ENCODE measurements at regions of chr19 and their contacts with region 1.

Region 1: GRCh38 chr19:1189419-1189818 is 15.4 kb upstream of the SBNO2 start:
- DNase-seq: no peak
- ATAC-seq: no peak
- H3K4me3 ChIP-seq: no peak overlapping the region
- H3K27ac ChIP-seq: no peak overlapping the region
- H3K4me1 ChIP-seq: no peaks in the 10 kb centered on the region
- H3K27me3 ChIP-seq: no peaks in the 10 kb centered on the region

Region 2: GRCh38 chr19:1113033-1113985 is 76.1 kb before region 1 on chr19:
- intact Hi-C with region 1: loop called (anchors 5 kb)
- DNase-seq: peak; percentile 98 to 99 (median 99)
- ATAC-seq: peak; percentile 90 to 91
- H3K4me3 ChIP-seq: no peak overlapping the region
- H3K27ac ChIP-seq: peak overlapping the region; percentile 32
- H3K4me1 ChIP-seq: no peaks in the 10 kb centered on the region
- H3K27me3 ChIP-seq: no peaks in the 10 kb centered on the region

Region 3: DNA sequence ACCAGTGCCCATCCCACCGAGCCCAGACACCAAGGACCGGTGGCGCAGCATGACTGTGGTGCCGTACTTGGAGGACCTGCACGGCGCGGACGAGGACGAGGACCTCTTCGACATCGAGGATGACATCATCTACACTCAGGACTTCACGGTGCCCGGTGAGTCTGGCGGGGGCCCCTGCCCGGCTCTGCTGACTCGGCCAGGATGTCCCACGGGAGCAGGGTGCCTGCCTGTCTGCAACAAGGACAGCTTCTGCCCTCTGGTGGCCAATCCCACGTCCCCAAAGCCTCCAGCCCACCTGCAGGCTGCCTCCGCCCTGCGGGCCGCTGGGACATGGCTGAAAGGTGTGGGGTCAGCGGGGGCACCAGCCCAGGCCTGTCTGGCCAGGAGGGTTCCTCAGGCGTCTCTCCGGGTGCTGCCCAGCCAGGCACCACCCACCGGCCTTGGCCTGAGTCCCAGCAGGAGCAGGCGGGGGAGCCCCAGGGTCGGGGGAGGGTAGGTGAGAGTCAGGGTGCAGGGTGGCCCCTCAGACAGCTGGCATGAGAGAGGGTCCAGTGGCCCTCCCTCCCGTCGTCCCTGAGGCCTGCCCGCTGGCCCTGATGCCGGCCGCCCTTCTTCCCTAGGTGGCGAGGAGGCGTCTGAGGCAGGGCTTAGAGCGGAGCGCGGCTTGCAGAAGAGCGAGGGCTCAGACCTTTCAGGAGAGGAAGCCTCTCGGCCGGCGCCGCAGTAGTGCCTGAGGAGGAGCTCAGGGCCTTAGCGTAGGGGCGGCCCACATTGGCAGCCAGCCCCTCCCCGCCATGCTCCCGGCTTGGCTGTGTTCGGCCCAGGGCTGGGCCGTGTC is 33.8 kb after region 1 on chr19:
- intact Hi-C with region 1: no loop called
- DNase-seq: peak in 1 of 3 donors; percentile 72
- ATAC-seq: no peak
- H3K4me3 ChIP-seq: no peak overlapping the region
- H3K27ac ChIP-seq: no peak overlapping the region
- H3K4me1 ChIP-seq: no peaks in the 10 kb centered on the region
- H3K27me3 ChIP-seq: no peaks in the 10 kb centered on the region